Activated CD8-positive, alpha-beta memory T cell treated with anti-CD3 and anti-CD28 coated beads, Interleukin-2, amount 10 ng/mL, durations not matched to agents 7 days and 5 days (primary cell): ENCODE measurements at regions of chr17 and their contacts with region 1.

Region 1: DNA sequence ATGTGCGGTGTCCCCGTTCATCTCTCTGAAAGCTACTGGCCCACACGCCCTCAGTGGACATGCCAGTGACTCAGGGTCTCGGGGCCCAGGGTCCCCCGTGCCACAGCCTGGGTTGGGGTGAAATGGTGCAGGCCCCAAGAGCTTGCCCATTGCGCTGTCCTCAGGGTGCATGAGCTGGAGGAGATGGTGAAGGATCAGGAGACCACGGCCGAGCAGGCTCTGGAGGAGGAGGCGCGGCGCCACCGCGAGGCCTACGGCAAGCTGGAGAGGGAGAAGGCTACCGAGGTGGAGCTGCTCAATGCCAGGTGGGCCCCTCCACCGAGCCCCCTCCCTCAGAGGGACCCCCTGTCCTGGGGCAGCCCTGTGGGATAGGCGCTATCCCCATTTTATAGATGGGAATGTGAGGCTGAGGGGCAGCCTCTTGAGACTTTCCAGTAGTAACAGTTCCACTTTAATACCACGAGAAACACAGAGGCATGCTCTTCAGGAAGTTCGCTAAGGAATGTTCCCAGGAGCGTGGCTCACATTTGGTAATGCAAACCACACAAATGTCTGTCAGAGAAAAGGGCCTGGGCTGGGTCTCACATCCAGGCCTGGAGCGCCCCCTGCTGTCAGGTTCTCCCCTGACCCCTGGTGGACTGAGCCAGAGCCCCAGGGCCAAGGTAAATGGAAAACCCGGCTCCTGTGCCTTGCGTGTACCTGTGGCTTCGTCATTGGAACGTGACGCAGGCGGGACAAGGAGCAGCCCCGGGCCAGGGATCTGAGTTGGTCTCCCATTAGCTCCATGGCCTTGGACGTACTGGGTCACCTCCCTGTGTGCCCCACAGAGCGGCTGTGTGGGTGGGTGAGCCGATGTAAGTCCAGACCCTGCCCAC is 133.7 kb downstream of the RAB11FIP4 start:
- DNase-seq: peak; percentile 87
- ATAC-seq: peak; percentile 85
- H3K4me3 Mint-ChIP-seq: no peak overlapping the region
- H3K27ac Mint-ChIP-seq: no peak overlapping the region
- H3K4me1 Mint-ChIP-seq: peaks cover 1% of the 10 kb centered on the region
- H3K27me3 Mint-ChIP-seq: no peaks in the 10 kb centered on the region

Region 2: GRCh38 chr17:31388770-31389661 is 136.1 kb before region 1 on chr17:
- CTCF ChIA-PET with region 1: interaction called, 31 read pairs
- DNase-seq: peak; percentile 51
- ATAC-seq: peak; percentile 54
- H3K4me3 Mint-ChIP-seq: no peak overlapping the region
- H3K27ac Mint-ChIP-seq: no peak overlapping the region
- H3K4me1 Mint-ChIP-seq: peaks cover 7% of the 10 kb centered on the region
- H3K27me3 Mint-ChIP-seq: peaks cover 43% of the 10 kb centered on the region

Region 3: GRCh38 chr17:31444026-31444425 is 81.1 kb before region 1 on chr17:
- CTCF ChIA-PET with region 1: interaction called, 10 read pairs
- DNase-seq: no peak
- ATAC-seq: no peak
- H3K4me3 Mint-ChIP-seq: no peak overlapping the region
- H3K27ac Mint-ChIP-seq: no peak overlapping the region
- H3K4me1 Mint-ChIP-seq: no peaks in the 10 kb centered on the region
- H3K27me3 Mint-ChIP-seq: no peaks in the 10 kb centered on the region

Region 4: GRCh38 chr17:31548709-31549108 is 23.5 kb after region 1 on chr17:
- CTCF ChIA-PET with region 1: no interaction called
- DNase-seq: no peak
- ATAC-seq: no peak
- H3K4me3 Mint-ChIP-seq: peak overlapping the region; percentile 90
- H3K27ac Mint-ChIP-seq: peak overlapping the region; percentile 84
- H3K4me1 Mint-ChIP-seq: peaks cover 19% of the 10 kb centered on the region
- H3K27me3 Mint-ChIP-seq: peaks cover 5% of the 10 kb centered on the region

Region 5: DNA sequence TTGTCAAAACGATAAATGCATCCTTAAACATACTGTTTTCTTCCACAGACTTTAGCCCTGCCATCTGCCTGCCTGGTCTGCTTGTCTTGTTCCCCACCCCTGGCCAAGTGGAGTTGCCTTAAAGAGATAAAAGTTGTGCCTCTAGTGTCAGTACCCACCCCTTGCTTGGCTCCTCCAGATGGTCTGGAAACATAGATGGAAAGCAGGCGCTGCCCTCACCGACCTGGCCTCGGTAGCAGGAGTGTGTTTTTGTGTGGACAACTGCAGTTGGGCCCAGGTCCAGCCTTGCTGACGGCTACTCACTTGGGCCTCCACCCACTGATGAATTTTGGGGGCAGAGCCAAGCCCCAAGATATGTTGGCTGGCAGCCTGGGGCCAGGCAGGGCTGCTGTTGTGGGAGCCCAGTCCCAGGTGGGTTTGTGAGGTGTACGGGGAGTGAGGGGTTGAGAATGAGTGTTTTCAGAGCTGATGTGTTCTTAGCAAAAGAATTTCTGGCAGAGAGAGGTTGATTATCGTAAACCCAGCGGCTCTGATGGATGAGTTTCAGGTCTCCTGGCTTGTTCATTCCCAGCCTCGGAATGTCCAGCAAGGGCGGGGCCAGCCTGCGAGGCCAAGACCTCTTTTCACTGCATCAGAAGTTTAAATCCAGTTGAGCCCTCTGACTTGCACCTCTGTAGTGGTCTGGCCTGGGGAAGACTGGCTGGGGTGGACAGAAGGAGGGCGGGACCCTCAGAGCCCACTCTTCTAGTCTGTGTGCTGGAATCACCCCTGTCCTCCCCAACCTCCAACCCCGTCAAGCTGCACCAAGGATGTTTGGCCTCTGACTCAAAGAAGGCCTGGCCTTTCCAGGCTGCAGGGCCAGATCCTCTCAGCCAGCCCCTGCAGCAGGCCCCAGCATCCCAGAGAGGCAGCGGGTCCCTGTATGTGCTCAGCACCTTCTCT is 46.1 kb after region 1 on chr17:
- CTCF ChIA-PET with region 1: no interaction called
- DNase-seq: no peak
- ATAC-seq: no peak
- H3K4me3 Mint-ChIP-seq: no peak overlapping the region
- H3K27ac Mint-ChIP-seq: no peak overlapping the region
- H3K4me1 Mint-ChIP-seq: no peaks in the 10 kb centered on the region
- H3K27me3 Mint-ChIP-seq: peaks cover 3% of the 10 kb centered on the region